ENCODE measurements at regions of chr15 and their contacts with region 1.

Region 1: GRCh38 chr15:77496710-77497103 is 76.0 kb downstream of the HMG20A start:
- DNase-seq: peak; percentile 95
- H3K4me3 ChIP-seq: peak overlapping the region in 2 of 4 donors; percentile 8 to 15
- H3K27ac ChIP-seq: peak overlapping the region; percentile 78 to 85 (median 82)
- H3K4me1 ChIP-seq: peaks cover 0 to 61% (median 46%) of the 10 kb centered on the region in 4 donors
- H3K27me3 ChIP-seq: no peaks in the 10 kb centered on the region
- CTCF ChIP-seq: peak; percentile 73 to 92 (median 86)
- EP300 ChIP-seq: no peak
- POLR2A ChIP-seq: no peak

Region 2: GRCh38 chr15:77118882-77119321 is 377.8 kb before region 1 on chr15:
- intact Hi-C with region 1: loop called (anchors 1 kb)
- DNase-seq: no peak
- H3K4me3 ChIP-seq: no peak overlapping the region
- H3K27ac ChIP-seq: no peak overlapping the region
- H3K4me1 ChIP-seq: peaks cover 0 to 12% (median 7%) of the 10 kb centered on the region in 4 donors
- H3K27me3 ChIP-seq: no peaks in the 10 kb centered on the region
- CTCF ChIP-seq: peak in 3 of 4 experiments; percentile 45 to 69 (median 64)
- EP300 ChIP-seq: no peak
- POLR2A ChIP-seq: no peak

Region 3: GRCh38 chr15:77186594-77187011 is 310.1 kb before region 1 on chr15:
- intact Hi-C with region 1: loop called (anchors 5 kb)
- DNase-seq: no peak
- H3K4me3 ChIP-seq: no peak overlapping the region
- H3K27ac ChIP-seq: peak overlapping the region; percentile 30 to 68 (median 50)
- H3K4me1 ChIP-seq: peaks cover 0 to 18% (median 15%) of the 10 kb centered on the region in 4 donors
- H3K27me3 ChIP-seq: no peaks in the 10 kb centered on the region
- CTCF ChIP-seq: peak; percentile 22 to 41 (median 32)
- EP300 ChIP-seq: no peak
- POLR2A ChIP-seq: no peak

Region 4: GRCh38 chr15:77419836-77420609 is 76.7 kb before region 1 on chr15 and contains the start of gene PEAK1:
- intact Hi-C with region 1: loop called (anchors 1 kb)
- DNase-seq: peak; percentile 100
- H3K4me3 ChIP-seq: peak within 1 kb of the TSS; percentile 88 to 95 (median 90)
- H3K27ac ChIP-seq: peak within 1 kb of the TSS; percentile 93 to 97 (median 96)
- H3K4me1 ChIP-seq: peaks cover 0 to 57% (median 45%) of the 10 kb centered on the region in 4 donors
- H3K27me3 ChIP-seq: no peaks in the 10 kb centered on the region
- CTCF ChIP-seq: no peak
- EP300 ChIP-seq: no peak
- POLR2A ChIP-seq: peak; percentile 52 to 70
- total RNA-seq, gene PEAK1: 29.3 to 59.8 (median 33.3) TPM

Region 5: GRCh38 chr15:77543159-77543882 is 46.6 kb after region 1 on chr15:
- intact Hi-C with region 1: loop called (anchors 5 kb)
- DNase-seq: peak; percentile 93
- H3K4me3 ChIP-seq: peak overlapping the region; percentile 18 to 45 (median 42)
- H3K27ac ChIP-seq: peak overlapping the region; percentile 22 to 52 (median 44)
- H3K4me1 ChIP-seq: peaks cover 0 to 15% (median 13%) of the 10 kb centered on the region in 4 donors
- H3K27me3 ChIP-seq: no peaks in the 10 kb centered on the region
- CTCF ChIP-seq: peak; percentile 94 to 97 (median 97)
- EP300 ChIP-seq: no peak
- POLR2A ChIP-seq: no peak

Measured in sigmoid colon (tissue), 7 donors.